IMR-90 (cell line): ENCODE measurements at regions of chr9 and their contacts with region 1.

Region 1: GRCh38 chr9:90408659-90409058 is 234.0 kb downstream of the DIRAS2 start:
- DNase-seq: no peak
- ATAC-seq: no peak
- H3K4me3 ChIP-seq: no peak overlapping the region
- H3K27ac ChIP-seq: no peak overlapping the region
- H3K4me1 ChIP-seq: no peaks in the 10 kb centered on the region
- H3K27me3 ChIP-seq: no peaks in the 10 kb centered on the region
- CTCF ChIP-seq: no peak
- POLR2A ChIP-seq: no peak
- RAD21 ChIP-seq: no peak

Region 2: GRCh38 chr9:90251316-90251715 is 157.3 kb before region 1 on chr9:
- CTCF ChIA-PET with region 1: no interaction called
- POLR2A ChIA-PET with region 1: no interaction called
- dilution Hi-C with region 1: no loop called
- in situ Hi-C with region 1: no loop called
- intact Hi-C with region 1: no loop called
- DNase-seq: no peak
- ATAC-seq: no peak
- H3K4me3 ChIP-seq: no peak overlapping the region
- H3K27ac ChIP-seq: no peak overlapping the region
- H3K4me1 ChIP-seq: no peaks in the 10 kb centered on the region
- H3K27me3 ChIP-seq: no peaks in the 10 kb centered on the region
- CTCF ChIP-seq: no peak
- POLR2A ChIP-seq: no peak
- RAD21 ChIP-seq: no peak

Region 3: GRCh38 chr9:90349907-90350306 is 58.8 kb before region 1 on chr9:
- CTCF ChIA-PET with region 1: no interaction called
- POLR2A ChIA-PET with region 1: no interaction called
- dilution Hi-C with region 1: no loop called
- in situ Hi-C with region 1: no loop called
- intact Hi-C with region 1: no loop called
- DNase-seq: no peak
- ATAC-seq: no peak
- H3K4me3 ChIP-seq: no peak overlapping the region
- H3K27ac ChIP-seq: no peak overlapping the region
- H3K4me1 ChIP-seq: no peaks in the 10 kb centered on the region
- H3K27me3 ChIP-seq: no peaks in the 10 kb centered on the region
- CTCF ChIP-seq: no peak
- POLR2A ChIP-seq: no peak
- RAD21 ChIP-seq: no peak

Region 4: DNA sequence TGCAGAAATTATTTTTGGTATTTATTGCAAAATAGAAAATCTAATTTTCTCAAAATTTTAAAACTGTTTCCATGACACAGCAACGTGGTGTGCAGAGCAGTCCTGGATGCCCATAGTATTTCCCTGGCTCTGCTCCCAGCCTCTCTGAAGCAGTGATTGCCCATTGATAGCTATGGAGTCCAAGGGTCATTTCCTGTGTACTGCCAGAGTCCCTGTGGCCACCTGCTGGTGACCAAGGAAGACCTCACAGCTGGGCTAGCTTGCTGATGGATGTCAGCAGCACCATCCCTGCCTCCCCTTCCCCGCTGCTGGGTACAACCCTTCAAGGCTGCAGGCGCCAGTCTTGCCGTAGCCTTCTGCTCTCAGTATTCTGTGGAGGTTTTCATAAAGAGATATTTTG is 49.8 kb after region 1 on chr9:
- CTCF ChIA-PET with region 1: no interaction called
- POLR2A ChIA-PET with region 1: no interaction called
- dilution Hi-C with region 1: no loop called
- in situ Hi-C with region 1: no loop called
- intact Hi-C with region 1: no loop called
- DNase-seq: no peak
- ATAC-seq: no peak
- H3K4me3 ChIP-seq: no peak overlapping the region
- H3K27ac ChIP-seq: no peak overlapping the region
- H3K4me1 ChIP-seq: no peaks in the 10 kb centered on the region
- H3K27me3 ChIP-seq: no peaks in the 10 kb centered on the region
- CTCF ChIP-seq: no peak
- POLR2A ChIP-seq: no peak
- RAD21 ChIP-seq: no peak

Region 5: GRCh38 chr9:90539286-90539685 is 130.6 kb after region 1 on chr9:
- CTCF ChIA-PET with region 1: no interaction called
- POLR2A ChIA-PET with region 1: no interaction called
- dilution Hi-C with region 1: no loop called
- in situ Hi-C with region 1: no loop called
- intact Hi-C with region 1: loop called (anchors 10 kb)
- DNase-seq: no peak
- ATAC-seq: no peak
- H3K4me3 ChIP-seq: no peak overlapping the region
- H3K27ac ChIP-seq: no peak overlapping the region
- H3K4me1 ChIP-seq: no peaks in the 10 kb centered on the region
- H3K27me3 ChIP-seq: no peaks in the 10 kb centered on the region
- CTCF ChIP-seq: no peak
- POLR2A ChIP-seq: no peak
- RAD21 ChIP-seq: no peak

Region 6: DNA sequence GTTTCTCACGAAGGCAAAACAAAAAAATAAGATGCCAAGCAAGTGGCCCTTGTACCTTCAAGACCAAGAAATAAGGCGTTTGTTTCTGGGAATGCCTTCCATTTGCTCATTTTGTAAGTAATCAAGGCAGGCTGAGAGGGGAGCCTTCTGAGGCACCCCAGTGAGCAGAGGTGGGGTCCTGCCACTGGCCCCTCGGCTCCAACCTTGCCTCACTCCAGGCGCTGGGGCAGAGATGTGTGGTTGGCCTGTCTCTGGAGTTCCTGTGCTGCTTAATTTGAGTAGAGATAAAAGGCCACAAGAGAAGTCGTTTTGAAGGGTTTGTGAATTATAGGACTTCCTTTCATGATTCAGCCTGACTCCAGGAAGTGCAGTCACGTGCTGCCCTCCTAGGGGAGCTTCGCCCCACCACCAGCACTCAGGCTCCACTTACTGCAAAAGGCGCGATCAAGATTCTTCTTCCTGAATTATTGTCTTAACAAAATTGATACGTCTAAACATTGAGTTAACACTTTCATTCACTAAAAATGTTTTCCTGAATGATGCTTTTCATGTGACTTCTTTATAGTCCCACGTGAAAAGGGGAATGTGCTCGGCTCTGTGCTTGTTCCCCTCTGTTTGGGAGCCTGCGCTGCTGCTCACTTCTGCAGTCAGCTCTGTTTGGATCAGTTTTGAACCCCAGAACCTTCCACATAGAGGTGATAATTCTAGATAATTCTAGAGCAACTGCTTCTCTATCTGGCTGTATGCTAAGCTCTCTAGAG is 406.7 kb after region 1 on chr9:
- CTCF ChIA-PET with region 1: no interaction called
- POLR2A ChIA-PET with region 1: no interaction called
- dilution Hi-C with region 1: no loop called
- in situ Hi-C with region 1: no loop called
- intact Hi-C with region 1: no loop called
- DNase-seq: peak; percentile 2
- ATAC-seq: no peak
- H3K4me3 ChIP-seq: no peak overlapping the region
- H3K27ac ChIP-seq: no peak overlapping the region
- H3K4me1 ChIP-seq: no peaks in the 10 kb centered on the region
- H3K27me3 ChIP-seq: no peaks in the 10 kb centered on the region
- CTCF ChIP-seq: no peak
- POLR2A ChIP-seq: no peak
- RAD21 ChIP-seq: no peak